SK-N-SH (cell line): ENCODE measurements at regions of chr17 and their contacts with region 1.

Region 1: DNA sequence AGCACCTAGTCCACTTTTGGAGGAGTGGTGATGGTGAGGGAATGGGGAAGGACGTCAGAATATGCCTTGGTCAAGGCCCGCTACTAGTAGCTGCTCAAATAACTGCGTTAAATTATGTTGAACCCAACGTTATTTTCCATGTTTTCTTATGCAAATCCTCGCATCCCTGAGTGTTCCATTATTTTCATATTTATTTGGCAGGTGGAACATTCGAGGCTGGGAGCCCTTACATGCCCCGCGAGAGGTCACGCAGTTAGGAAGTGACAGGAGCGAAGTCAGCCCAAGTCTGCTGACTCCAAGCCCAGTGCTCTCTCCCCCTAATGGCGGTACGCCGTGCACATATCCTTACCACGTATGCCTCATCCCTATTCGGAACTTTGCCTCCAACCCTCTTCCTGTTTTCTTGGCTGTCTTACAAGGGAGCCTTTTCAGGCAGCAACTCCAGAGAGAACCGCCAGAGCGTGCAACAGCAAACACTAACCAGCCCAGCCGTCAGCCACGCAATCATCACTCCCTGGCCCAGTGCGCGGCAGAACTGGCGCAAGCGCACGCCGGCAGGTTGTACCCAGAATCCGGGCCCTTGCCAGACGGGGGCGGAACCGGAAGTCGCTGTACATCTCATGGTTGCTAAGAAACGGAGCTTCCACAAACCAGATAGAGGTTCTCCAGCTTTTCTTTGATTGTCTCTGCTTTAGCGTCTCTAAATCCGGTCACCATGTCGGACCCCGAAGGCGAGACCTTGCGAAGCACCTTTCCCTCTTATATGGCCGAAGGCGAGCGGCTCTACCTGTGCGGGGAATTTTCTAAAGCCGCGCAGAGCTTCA is at the start of gene ODAD4:
- DNase-seq: peak; percentile 95
- H3K4me3 ChIP-seq: peak within 1 kb of the TSS; percentile 61 to 70
- H3K27ac ChIP-seq: peak within 1 kb of the TSS; percentile 81 to 83
- H3K4me1 ChIP-seq: peaks cover 0 to 10% of the 10 kb centered on the region in 2 experiments; a peak in 3 of 4 replicates
- H3K27me3 ChIP-seq: no peaks in the 10 kb centered on the region
- CTCF ChIP-seq: peak; percentile 53
- EP300 ChIP-seq: no peak; a peak in 1 of 4 replicates
- RAD21 ChIP-seq: peak; percentile 56
- polyA plus RNA-seq, gene ODAD4: 1.1 and 1.6 TPM in 2 replicates

Region 2: GRCh38 chr17:41918314-41919164 is 11.7 kb before region 1 on chr17 and contains the start of gene ACLY:
- CTCF ChIA-PET with region 1: interaction called, 3 read pairs
- POLR2A ChIA-PET with region 1: interaction called, 21 read pairs
- DNase-seq: peak; percentile 99
- H3K4me3 ChIP-seq: peak within 1 kb of the TSS; percentile 80 to 82
- H3K27ac ChIP-seq: peak within 1 kb of the TSS; percentile 84 to 90
- H3K4me1 ChIP-seq: peaks cover 22 to 36% of the 10 kb centered on the region in 2 experiments; a peak in 2 of 4 replicates
- H3K27me3 ChIP-seq: no peaks in the 10 kb centered on the region
- CTCF ChIP-seq: no peak
- EP300 ChIP-seq: no peak
- RAD21 ChIP-seq: no peak
- polyA plus RNA-seq, gene ACLY: 161 and 163 TPM in 2 replicates